ENCODE measurements at regions of chr3 and their contacts with region 1.

Region 1: GRCh38 chr3:37139567-37140052 is 34.8 kb downstream of the LRRFIP2 start:
- DNase-seq: no peak
- ATAC-seq: peak in 5 of 8 donors; percentile 51 to 76 (median 67)
- H3K4me3 ChIP-seq: no peak overlapping the region
- H3K27ac ChIP-seq: peak overlapping the region in 8 of 10 donors; percentile 10 to 51 (median 30)
- H3K4me1 ChIP-seq: peaks cover 2 to 66% (median 33%) of the 10 kb centered on the region in 9 donors
- H3K27me3 ChIP-seq: no peaks in the 10 kb centered on the region
- CTCF ChIP-seq: no peak

Region 2: GRCh38 chr3:36876181-36876936 is 263.3 kb before region 1 on chr3:
- intact Hi-C with region 1: no loop called
- DNase-seq: no peak
- ATAC-seq: peak in 3 of 8 donors; percentile 11 to 25 (median 19)
- H3K4me3 ChIP-seq: peak overlapping the region in 1 of 10 donors; percentile 18
- H3K27ac ChIP-seq: peak overlapping the region in 1 of 10 donors; percentile 83
- H3K4me1 ChIP-seq: peaks cover 0 to 15% (median 0%) of the 10 kb centered on the region in 9 donors
- H3K27me3 ChIP-seq: no peaks in the 10 kb centered on the region
- CTCF ChIP-seq: no peak

Region 3: DNA sequence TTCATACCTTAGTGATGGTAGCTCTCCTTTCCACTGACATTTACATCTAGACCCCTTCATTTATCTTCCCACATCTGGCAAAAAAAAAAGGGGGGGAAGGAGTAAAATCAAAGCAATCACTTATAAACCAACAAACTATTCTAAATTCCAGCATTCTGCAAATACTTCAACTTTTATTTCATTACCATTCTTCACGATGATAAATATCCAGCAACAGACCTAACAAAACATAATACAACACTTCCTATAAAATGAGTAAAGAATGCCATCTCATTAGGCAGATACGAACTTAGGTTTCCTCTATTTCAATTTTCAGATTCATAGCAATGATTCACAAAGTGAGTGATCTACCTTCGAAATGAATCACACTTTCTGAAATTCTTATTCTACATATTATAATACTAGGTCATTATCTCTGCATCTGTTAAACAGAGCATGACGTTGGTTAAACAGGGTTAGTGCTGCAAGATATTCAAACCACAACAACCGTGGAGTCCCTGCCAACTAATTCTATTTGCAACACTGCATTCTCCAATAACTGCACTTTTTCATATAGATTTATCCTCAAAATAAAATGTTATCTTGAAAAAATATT is 35.0 kb after region 1 on chr3 and contains the start of gene LRRFIP2:
- intact Hi-C with region 1: loop called in 1 of 10 experiments (anchors 5 kb)
- DNase-seq: no peak
- ATAC-seq: no peak
- H3K4me3 ChIP-seq: peak within 1 kb of the TSS; percentile 80 to 99 (median 96)
- H3K27ac ChIP-seq: peak within 1 kb of the TSS; percentile 92 to 98 (median 96)
- H3K4me1 ChIP-seq: peaks cover 0 to 81% (median 70%) of the 10 kb centered on the region in 9 donors
- H3K27me3 ChIP-seq: no peaks in the 10 kb centered on the region
- CTCF ChIP-seq: no peak
- total RNA-seq, gene LRRFIP2: 105 to 199 (median 127) TPM

Measured in heart right ventricle (tissue), 16 donors.